ENCODE measurements at regions of chr16 and their contacts with region 1.

Region 1: GRCh38 chr16:30957456-30958174 is at the start of gene SETD1A:
- DNase-seq: peak; percentile 94 to 100 (median 97)

Region 2: DNA sequence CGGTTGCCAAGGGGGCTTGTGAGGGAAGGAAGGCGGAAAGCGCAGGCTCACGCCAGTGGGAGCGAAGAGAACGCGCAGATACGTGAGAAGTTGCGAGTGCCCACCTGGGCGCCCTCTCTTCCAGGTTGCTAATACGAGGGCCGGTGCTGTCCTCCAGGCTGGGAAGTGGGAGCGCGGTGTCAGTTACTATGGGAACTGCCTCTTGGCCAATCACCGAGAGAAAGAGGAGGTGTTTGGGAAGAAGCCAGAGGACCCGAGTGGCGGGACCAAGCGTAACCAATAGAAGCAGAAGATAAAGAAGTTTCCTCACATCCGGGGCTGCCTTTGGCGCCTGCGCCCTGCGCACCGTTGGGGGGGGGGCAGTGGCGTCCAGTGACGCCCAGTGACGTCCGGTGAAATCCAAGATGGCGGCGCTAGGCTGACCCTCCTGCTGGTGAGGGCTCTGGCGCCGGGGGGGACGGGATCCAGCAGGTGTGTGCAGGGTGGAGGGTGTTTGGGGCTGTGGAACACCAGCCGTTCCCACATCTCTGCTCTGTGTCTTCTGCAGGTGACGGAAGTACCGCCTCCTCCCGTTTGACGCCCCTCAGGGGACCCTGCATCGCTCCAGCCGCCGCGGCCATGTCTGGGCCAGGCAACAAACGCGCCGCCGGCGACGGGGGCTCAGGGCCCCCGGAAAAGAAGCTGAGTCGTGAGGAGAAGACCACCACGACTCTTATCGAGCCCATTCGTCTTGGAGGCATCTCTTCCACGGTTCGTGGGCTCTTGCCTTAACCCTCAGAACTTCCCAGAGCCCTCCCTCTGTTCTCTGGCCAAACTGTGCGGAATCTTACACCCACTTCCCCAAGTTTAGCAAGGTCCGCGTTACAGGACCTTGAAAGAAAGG is 195.4 kb before region 1 on chr16 and contains the starts of genes CFAP119 and RNF40:
- intact Hi-C with region 1: no loop called
- DNase-seq: peak; percentile 92 to 99 (median 96)

Region 3: GRCh38 chr16:31055613-31056012 is 98.0 kb after region 1 on chr16:
- intact Hi-C with region 1: no loop called
- DNase-seq: no peak

Region 4: DNA sequence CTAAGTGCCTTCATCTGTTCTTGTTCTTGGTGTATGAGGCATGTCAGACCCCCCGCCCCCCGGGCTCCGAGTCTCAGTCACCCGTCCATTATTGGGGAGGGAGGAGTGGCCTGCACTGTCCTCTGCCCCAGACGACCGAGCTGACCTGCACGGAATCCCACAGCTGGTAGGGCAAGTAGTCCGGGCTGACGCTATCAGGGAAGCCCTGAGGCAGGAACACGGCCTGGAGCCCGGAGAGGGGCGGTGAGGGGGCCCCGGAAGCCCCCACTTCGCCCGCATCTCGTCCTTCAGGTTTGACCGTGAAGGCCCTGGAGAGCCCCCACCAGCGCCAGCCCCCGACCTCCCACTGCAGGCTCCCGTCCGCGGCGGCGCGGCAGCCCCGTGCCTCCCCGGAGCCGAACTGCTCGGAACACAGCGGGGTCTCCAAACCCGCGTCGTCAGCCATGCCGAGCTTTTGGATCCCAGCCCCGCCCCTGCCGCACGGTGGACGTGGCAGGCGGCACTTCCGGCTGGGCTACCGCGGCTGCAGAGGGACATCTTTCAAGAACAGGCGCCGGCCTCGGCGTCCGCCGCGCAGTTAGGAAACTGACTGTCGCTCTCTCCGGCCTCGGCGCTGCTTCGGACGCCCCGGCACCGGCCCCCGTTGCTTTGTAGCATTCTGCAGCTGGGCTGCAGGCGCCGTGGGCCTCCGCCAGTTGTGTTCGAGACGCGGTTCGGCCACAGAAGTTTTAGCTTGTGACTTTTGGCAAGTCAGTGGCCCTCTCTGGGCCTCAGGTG is 550.5 kb after region 1 on chr16 and contains the start of gene RUSF1:
- intact Hi-C with region 1: loop called (anchors 5 kb)
- DNase-seq: peak; percentile 87 to 99 (median 92)

Region 5: GRCh38 chr16:31713071-31713944 is 755.7 kb after region 1 on chr16:
- intact Hi-C with region 1: loop called (anchors 10 kb)
- DNase-seq: peak; percentile 87 to 99 (median 94)

Region 6: GRCh38 chr16:31868691-31869167 is 911.1 kb after region 1 on chr16:
- intact Hi-C with region 1: loop called (anchors 10 kb)
- DNase-seq: peak in 9 of 10 donors; percentile 46 to 92 (median 81)